ENCODE measurements at regions of chr9 and their contacts with region 1.

Region 1: GRCh38 chr9:99906403-99907207 is at the start of gene STX17:
- DNase-seq: no peak
- H3K4me3 ChIP-seq: peak within 1 kb of the TSS; percentile 71 to 90
- H3K27ac ChIP-seq: peak within 1 kb of the TSS; percentile 97
- H3K4me1 ChIP-seq: peaks cover 37% of the 10 kb centered on the region
- H3K27me3 ChIP-seq: no peaks in the 10 kb centered on the region
- CTCF ChIP-seq: no peak
- POLR2A ChIP-seq: peak in 1 of 2 donors; percentile 87
- total RNA-seq, gene STX17: 55.7 TPM

Region 2: DNA sequence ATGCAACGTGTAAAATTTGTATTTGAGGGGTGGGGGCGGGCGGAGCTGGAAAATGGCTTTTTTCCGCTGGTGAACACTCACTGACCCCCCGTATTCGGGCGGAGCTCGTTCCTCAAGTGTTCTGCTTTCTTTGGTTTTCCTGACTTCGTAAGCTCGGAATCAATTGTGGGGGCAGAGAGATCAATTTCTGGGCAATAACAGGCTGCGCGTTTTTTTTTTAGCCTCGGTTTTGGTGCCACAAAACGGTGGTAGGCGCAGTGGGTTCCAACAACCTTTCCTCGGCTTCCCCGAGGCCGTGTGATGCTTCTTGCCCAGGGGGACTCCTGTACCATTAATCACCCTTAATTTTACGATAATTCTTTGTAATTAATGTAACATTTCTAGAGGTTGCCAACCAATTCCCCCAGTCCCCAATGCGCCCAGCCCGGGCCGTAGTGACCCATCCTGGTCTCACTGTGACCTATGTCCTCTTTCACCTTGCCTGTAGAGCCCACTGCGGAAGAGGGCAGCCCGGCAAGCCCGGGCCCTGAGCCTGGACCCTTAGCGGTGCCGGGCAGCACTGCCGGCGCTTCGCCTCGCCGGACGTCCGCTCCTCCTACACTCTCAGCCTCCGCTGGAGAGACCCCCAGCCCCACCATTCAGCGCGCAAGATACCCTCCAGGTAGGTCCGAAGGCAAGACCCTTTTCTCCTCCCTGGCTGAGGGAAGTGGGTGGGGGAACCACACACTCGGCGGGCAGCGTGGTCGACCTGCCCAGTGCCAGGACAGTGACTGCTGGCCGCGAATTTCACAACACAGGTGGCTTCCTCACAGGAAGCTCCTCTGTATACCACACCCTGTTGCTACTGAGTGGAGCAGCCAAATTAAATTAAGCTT is 81.2 kb before region 1 on chr9:
- intact Hi-C with region 1: loop called (anchors 1 kb)
- DNase-seq: no peak
- H3K4me3 ChIP-seq: peak overlapping the region in 1 of 2 donors; percentile 92
- H3K27ac ChIP-seq: no peak overlapping the region
- H3K4me1 ChIP-seq: peaks cover 31% of the 10 kb centered on the region
- H3K27me3 ChIP-seq: no peaks in the 10 kb centered on the region
- CTCF ChIP-seq: no peak
- POLR2A ChIP-seq: no peak

Measured in vagina (tissue), 2 donors.